Head of caudate nucleus (tissue), 42 donors: ENCODE measurements at regions of chr14 and their contacts with region 1.

Region 1: DNA sequence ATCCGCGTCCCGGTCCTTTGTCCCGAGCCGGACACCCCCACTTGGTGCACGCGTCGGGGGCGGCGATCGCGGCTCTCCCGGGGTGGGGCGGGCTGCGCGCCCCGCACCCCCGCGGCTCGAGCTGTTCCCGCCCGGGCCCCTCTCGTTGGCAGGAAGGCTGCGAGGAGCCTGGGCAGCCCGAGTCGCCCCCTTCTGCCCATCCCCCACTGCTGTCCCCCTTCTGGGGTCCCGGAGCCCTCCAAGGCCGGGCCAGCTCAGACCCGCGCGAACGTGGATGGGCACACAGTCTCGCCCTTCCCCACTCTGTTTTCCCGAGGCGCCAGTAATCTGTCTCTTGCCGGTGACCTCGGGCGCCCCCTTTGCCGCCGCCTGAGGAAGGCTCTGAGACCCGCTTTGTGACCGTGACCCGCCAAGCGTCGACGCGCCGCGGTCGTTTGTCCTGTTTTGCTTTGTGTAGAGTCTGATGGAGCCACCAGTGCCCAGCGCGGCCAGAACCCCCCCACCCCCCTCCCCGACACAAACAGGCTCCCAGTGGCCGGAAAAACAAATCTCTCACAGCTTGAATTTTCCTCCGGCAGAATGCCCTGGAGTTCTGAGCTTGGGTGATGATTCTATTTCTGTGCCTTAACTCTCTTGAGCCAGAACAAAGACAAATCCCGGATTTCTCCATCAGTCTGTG is 610 bp downstream of the C14orf132 start:
- DNase-seq: peak; percentile 23 to 89 (median 64)

Region 2: GRCh38 chr14:96090441-96091133 is 50.8 kb after region 1 on chr14:
- intact Hi-C with region 1: loop called (anchors 5 kb)
- DNase-seq: peak; percentile 23 to 86 (median 63)